Activated T-helper 2 cell treated with anti-CD3 and anti-CD28 coated beads, Interferon-gamma antibody, Interleukin-2, Interleukin-4, amounts not matched to agents 10 μg/mL and 5 μg/mL and 100 μg/mL, durations not matched to agents 14 hours and 24 hours and 36 hours (primary cell): ENCODE measurements at regions of chr16 and their contacts with region 1.

Region 1: DNA sequence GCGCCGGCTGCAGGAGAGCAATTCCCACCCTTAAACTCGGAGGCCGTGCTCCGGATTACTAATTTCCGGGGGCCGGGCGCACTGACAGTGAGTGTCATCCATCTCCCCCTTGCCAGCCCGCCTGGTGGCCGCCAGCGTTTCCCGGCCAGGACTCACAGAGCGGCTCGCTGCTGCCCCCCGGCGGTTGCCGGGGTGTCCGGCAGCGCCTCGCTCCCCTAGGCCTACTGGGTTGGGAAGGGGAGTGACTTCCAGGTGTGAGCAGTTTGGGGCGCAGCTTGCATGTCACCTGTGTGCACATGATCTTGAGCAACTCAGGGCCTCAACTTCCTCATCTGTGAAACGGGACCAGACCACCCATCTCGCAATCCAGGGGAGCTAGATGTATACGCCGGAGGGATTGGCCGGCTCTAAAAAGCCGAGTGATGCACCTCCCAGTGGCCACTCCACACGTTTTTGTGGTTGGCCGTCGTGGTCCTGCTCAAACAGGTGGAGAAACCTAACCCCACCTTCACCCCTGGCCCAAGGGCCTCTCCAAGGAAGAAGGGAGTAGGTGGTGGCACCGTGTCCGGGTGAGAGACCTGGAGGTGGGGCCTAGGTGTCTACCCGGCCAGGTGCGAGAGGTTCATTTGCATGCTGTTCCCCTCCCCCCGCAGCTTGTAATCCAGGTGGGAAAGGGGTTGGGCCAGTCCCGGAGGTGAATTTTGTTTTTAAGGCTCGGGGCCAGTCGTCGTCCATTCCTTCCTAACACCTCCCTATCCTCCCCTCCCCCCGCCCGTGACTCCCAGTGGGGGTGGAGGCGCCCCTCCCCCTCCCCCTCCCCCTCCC is 2.4 kb upstream of the GSE1 start:
- DNase-seq: peak; percentile 82
- H3K4me3 Mint-ChIP-seq: peak overlapping the region; percentile 77
- H3K27ac Mint-ChIP-seq: peak overlapping the region; percentile 49
- H3K4me1 Mint-ChIP-seq: peaks cover 23% of the 10 kb centered on the region
- H3K27me3 Mint-ChIP-seq: peaks cover 1% of the 10 kb centered on the region

Region 2: DNA sequence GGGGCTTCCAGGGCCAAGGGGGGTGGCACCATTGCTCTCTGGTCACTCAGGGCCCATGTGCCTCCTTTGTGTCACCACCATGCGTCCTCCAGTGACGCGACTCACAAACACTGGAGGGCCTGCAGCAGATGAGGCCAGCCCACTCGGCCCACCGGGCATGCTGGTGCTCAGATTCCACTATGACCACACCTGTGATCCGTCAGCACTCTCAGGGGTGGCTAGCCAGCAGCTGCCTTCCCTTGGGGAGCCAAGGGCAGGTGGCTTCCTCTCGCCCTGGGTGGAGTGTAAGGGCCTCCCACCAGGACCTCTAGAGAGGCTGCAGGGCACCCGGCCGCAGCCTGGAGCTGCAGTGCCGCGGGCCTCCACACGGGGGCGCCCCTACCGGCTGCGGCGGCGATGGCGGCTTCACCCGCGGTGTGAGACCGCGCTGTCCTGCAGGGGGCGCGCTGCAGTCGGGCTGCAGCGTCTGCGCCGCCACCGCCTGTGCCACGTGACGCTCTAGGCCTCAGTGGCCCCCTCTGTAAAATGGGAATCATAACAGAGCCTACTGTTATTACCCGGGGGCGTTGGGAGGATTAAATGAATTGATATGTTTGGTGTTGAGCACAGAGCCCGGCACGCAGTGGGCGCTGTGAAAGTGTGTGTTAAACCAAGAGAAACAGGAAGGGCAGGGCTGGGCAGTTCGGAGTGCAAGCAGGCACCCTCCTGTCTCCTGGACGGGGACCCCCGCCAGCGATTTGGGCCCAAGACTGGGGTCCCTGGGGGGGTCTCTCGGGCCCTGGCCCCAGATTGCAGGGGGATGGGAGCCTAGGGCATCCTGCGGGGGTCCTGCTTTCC is 190.0 kb before region 1 on chr16:
- intact Hi-C with region 1: loop called (anchors 1 kb)
- DNase-seq: peak; percentile 66
- H3K4me3 Mint-ChIP-seq: no peak overlapping the region
- H3K27ac Mint-ChIP-seq: no peak overlapping the region
- H3K4me1 Mint-ChIP-seq: peaks cover 2% of the 10 kb centered on the region
- H3K27me3 Mint-ChIP-seq: no peaks in the 10 kb centered on the region

Region 3: DNA sequence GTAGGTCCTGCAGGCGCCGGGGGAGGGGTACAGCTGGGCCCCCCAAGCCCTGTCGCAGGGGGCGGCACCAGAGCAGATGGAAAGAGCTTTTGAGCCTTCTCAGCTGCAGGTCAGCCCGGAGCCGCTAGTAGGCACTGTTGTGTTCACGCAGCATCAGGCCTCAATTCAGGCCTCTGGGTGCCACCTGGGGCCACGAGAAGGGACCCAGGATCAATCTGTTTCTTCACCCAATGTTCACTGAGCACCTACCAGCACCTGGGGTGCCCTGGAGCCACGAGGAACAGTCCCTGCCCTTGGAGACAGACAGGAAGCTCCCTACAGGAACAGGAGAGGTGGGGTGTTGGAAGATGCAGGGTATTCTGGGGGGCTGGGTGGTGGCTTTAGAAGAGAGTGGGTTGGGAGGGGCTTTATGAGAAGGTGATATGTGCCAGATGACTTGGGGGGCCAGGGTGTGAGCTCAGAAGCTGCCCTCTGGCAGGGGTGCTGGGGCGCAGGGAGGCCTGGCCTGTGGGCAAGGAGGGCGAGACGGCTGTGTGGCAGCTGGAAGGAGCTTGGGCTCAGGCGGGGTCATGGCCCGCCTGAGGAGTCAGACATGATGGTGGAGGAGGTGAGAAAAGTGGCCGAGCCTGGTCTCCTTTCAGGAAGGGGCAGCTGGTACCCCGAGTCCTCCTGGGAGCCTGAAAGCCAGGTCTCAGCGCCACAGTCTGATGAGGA is 119.5 kb before region 1 on chr16:
- intact Hi-C with region 1: loop called (anchors 1 kb)
- DNase-seq: peak; percentile 14
- H3K4me3 Mint-ChIP-seq: no peak overlapping the region
- H3K27ac Mint-ChIP-seq: no peak overlapping the region
- H3K4me1 Mint-ChIP-seq: peaks cover 2% of the 10 kb centered on the region
- H3K27me3 Mint-ChIP-seq: peaks cover 3% of the 10 kb centered on the region